ENCODE measurements at regions of chr17 and their contacts with region 1.

Region 1: DNA sequence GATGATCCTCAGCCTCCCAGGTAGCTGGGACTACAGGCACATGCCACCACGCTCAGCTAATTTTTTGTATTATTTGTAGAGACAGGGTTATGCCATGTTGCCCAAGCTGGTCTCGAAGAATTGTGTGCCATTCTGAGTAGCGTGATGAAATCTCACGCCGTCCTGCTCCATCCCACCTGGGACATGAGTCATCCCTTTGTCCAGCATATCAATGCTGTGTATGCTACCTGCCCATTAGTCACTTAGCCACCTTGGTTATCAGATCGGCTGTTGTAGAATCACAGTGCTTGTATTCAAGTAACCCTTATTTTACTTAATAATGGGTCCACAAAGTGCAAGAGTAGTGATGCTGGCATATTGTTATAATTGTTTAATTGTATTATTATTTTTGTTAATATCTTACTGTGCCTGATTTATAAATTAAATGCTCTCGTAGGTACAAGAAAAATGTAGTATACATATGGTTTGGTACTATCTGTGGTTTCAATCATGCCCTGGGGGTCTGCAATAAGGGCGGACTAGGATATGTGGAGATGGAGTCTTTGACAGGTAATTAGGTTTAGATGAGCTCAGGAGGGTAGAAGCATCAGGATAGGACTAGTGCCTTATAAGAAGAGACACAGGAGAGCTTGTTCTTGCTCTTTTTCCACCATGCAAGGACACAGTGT is 26.6 kb upstream of the SLC13A2 start:
- DNase-seq: no peak
- H3K4me3 ChIP-seq: no peak overlapping the region
- H3K27me3 ChIP-seq: peaks cover 2% of the 10 kb centered on the region
- CTCF ChIP-seq: no peak

Region 2: GRCh38 chr17:28398280-28398981 is 48.4 kb before region 1 on chr17:
- CTCF ChIA-PET with region 1: no interaction called
- POLR2A ChIA-PET with region 1: interaction called, 19 read pairs
- DNase-seq: no peak
- H3K4me3 ChIP-seq: no peak overlapping the region
- H3K27me3 ChIP-seq: no peaks in the 10 kb centered on the region
- CTCF ChIP-seq: no peak

Measured in BJ (cell line).